Activated CD8-positive, alpha-beta T cell treated with anti-CD3 and anti-CD28 coated beads, Interleukin-2, amount 10 ng/mL, durations not matched to agents 7 days and 5 days (primary cell): ENCODE measurements at regions of chr14 and their contacts with region 1.

Region 1: GRCh38 chr14:77603654-77604255 is 12.7 kb downstream of the SPTLC2 start:
- DNase-seq: no peak
- ATAC-seq: no peak
- H3K4me3 Mint-ChIP-seq: no peak overlapping the region
- H3K27ac Mint-ChIP-seq: peak overlapping the region; percentile 32
- H3K4me1 Mint-ChIP-seq: peaks cover 84% of the 10 kb centered on the region
- H3K27me3 Mint-ChIP-seq: no peaks in the 10 kb centered on the region

Region 2: GRCh38 chr14:77554207-77554606 is 49.5 kb before region 1 on chr14:
- CTCF ChIA-PET with region 1: interaction called, 10 read pairs
- POLR2A ChIA-PET with region 1: no interaction called
- DNase-seq: peak; percentile 34
- ATAC-seq: peak; percentile 67
- H3K4me3 Mint-ChIP-seq: peak overlapping the region; percentile 50
- H3K27ac Mint-ChIP-seq: peak overlapping the region; percentile 82
- H3K4me1 Mint-ChIP-seq: peaks cover 33% of the 10 kb centered on the region
- H3K27me3 Mint-ChIP-seq: no peaks in the 10 kb centered on the region

Region 3: DNA sequence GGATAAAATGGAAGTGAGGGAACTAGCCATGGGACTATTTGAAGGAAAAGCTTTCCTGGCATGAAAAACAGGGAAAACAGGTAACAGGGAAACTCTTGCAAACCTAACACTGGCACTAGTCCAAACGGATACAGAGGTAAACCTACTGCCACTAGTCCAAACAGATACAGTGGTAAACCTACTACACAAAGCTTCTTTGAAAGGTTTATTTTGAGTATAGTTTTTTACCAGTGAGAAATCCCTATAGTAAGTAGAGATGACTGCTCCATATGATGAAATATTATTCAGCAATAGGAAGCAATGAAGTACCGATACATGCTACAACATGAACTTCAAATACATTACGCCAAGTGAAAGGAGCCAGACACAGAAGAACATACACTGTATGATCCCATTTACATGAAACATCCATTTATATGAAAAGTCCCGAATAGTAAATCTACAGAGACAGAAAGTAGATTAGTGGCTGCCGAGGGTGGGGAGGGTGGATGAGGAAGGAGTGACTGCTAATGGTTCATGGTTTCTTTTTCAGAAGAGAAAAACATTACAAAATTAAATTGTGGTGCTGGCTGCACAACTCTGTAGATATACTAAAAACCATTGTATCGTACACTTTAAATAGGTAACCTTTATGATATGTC is 12.8 kb before region 1 on chr14:
- CTCF ChIA-PET with region 1: interaction called, 17 read pairs
- POLR2A ChIA-PET with region 1: interaction called, 3 read pairs
- DNase-seq: no peak
- ATAC-seq: no peak
- H3K4me3 Mint-ChIP-seq: peak overlapping the region; percentile 4
- H3K27ac Mint-ChIP-seq: peak overlapping the region; percentile 65
- H3K4me1 Mint-ChIP-seq: peaks cover 76% of the 10 kb centered on the region
- H3K27me3 Mint-ChIP-seq: no peaks in the 10 kb centered on the region